ENCODE measurements at regions of chr2 and their contacts with region 1.

Region 1: GRCh38 chr2:96241900-96242611 is 23.7 kb downstream of the TMEM127 start:
- H3K4me3 Mint-ChIP-seq: peak overlapping the region; percentile 68
- H3K27ac Mint-ChIP-seq: peak overlapping the region; percentile 94
- H3K4me1 Mint-ChIP-seq: peaks cover 80% of the 10 kb centered on the region
- H3K27me3 Mint-ChIP-seq: no peaks in the 10 kb centered on the region

Region 2: DNA sequence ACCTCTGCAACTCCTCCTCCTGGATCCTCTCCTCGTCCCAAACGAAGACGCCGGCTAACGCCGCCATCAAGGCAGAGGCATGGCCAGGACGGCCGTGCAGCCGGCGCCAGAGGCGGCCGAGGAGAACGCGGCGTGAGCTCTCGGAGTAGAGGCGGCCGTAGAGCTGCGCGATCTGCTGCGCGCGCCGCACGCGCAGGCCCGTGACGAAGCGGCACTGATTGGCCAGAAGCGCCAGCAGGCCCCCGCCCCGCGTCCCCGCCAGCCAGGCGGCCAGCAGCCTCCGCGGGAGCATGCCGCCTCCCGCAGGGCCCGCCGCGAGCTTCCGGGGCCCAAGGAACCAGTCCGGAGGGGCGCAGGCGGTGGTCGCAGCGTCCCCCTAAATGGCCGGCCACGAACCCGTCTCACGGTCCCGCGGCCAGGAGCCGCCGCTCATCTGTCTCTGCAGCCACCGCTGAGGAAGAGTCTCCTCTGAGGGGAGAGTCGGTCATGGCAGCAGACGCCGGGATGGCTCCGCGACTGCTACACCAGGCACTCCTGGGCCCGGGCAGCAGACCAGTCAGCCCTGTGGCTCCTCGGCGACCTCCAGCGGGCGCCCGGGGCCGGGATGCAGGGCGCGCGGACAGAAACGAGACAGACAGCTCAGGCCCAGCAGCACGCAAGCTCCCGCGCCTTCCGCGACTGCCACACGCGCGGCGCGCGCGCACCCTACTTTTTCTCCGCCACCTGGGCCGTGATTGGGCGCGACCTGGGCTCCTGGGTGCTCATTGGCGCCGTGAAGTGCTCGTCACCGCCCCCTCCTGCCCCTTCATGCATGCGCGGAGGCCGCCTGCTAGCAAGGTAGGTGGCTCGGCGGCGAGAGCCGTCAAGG is 33.7 kb before region 1 on chr2 and contains the start of gene STARD7:
- intact Hi-C with region 1: loop called (anchors 2 kb)
- H3K4me3 Mint-ChIP-seq: peak within 1 kb of the TSS; percentile 86
- H3K27ac Mint-ChIP-seq: peak within 1 kb of the TSS; percentile 91
- H3K4me1 Mint-ChIP-seq: peaks cover 51% of the 10 kb centered on the region
- H3K27me3 Mint-ChIP-seq: no peaks in the 10 kb centered on the region

Region 3: GRCh38 chr2:96260404-96261260 is 18.6 kb after region 1 on chr2:
- intact Hi-C with region 1: loop called (anchors 1 kb)
- H3K4me3 Mint-ChIP-seq: peak overlapping the region; percentile 60
- H3K27ac Mint-ChIP-seq: peak overlapping the region; percentile 99
- H3K4me1 Mint-ChIP-seq: peaks cover 87% of the 10 kb centered on the region
- H3K27me3 Mint-ChIP-seq: no peaks in the 10 kb centered on the region

Measured in dendritic cell treated with granulocyte-macrophage colony-stimulating factor and Interleukin-4, amounts not matched to agents 40 ng/mL and 50 ng/mL, for 4 days (primary cell).